ENCODE measurements at regions of chr12 and their contacts with region 1.

Region 1: GRCh38 chr12:22689876-22690275 is 64.9 kb downstream of the ETNK1 start:
- DNase-seq: no peak
- H3K4me3 ChIP-seq: no peak overlapping the region
- H3K27me3 ChIP-seq: no peaks in the 10 kb centered on the region
- CTCF ChIP-seq: no peak

Region 2: DNA sequence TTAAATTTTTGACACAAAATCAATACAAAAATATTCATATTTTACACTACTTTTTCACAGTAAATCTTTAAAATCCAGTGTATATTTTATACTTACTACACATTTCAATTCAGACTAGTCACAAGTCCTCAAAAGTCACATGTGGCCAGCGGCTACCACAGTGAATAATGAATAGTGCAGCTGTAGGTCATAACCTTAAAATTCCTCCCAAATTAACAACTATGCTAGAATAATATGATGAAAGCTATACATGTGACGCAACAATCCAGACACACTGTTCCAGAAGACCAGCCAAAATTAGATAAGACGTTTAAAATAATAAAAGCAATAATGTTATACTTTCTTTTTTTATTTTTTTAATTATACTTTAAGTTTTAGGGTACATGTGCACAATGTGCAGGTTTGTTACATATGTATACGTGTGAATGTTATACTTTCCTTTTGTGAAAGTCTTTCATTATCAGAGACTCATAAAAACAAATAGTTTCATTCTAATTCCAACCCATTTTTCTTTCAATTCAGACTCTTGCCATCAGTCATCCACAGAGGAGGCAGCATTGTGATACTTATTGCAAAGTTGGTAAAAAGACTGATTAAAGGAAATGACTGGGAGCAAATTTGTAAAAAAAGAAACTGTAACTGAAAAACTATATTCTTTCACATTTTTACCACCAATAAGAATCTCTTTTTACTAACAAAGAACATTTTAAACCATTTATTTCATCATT is 212.5 kb before region 1 on chr12:
- CTCF ChIA-PET with region 1: no interaction called
- POLR2A ChIA-PET with region 1: interaction called, 22 read pairs
- DNase-seq: peak; percentile 41
- H3K4me3 ChIP-seq: no peak overlapping the region
- H3K27me3 ChIP-seq: no peaks in the 10 kb centered on the region
- CTCF ChIP-seq: no peak

Region 3: GRCh38 chr12:22812531-22812930 is 122.7 kb after region 1 on chr12:
- CTCF ChIA-PET with region 1: no interaction called
- POLR2A ChIA-PET with region 1: no interaction called
- DNase-seq: no peak
- H3K4me3 ChIP-seq: no peak overlapping the region
- H3K27me3 ChIP-seq: no peaks in the 10 kb centered on the region
- CTCF ChIP-seq: no peak

Measured in BJ (cell line).